Colonic mucosa (tissue), 4 donors: ENCODE measurements at regions of chr3 and their contacts with region 1.

Region 1: GRCh38 chr3:56702490-56703315 is 19.6 kb upstream of the TASOR start:
- DNase-seq: peak; percentile 61
- H3K4me3 ChIP-seq: no peak overlapping the region
- H3K27ac ChIP-seq: no peak overlapping the region
- H3K4me1 ChIP-seq: no peaks in the 10 kb centered on the region
- H3K27me3 ChIP-seq: no peaks in the 10 kb centered on the region
- CTCF ChIP-seq: peak; percentile 79

Region 2: DNA sequence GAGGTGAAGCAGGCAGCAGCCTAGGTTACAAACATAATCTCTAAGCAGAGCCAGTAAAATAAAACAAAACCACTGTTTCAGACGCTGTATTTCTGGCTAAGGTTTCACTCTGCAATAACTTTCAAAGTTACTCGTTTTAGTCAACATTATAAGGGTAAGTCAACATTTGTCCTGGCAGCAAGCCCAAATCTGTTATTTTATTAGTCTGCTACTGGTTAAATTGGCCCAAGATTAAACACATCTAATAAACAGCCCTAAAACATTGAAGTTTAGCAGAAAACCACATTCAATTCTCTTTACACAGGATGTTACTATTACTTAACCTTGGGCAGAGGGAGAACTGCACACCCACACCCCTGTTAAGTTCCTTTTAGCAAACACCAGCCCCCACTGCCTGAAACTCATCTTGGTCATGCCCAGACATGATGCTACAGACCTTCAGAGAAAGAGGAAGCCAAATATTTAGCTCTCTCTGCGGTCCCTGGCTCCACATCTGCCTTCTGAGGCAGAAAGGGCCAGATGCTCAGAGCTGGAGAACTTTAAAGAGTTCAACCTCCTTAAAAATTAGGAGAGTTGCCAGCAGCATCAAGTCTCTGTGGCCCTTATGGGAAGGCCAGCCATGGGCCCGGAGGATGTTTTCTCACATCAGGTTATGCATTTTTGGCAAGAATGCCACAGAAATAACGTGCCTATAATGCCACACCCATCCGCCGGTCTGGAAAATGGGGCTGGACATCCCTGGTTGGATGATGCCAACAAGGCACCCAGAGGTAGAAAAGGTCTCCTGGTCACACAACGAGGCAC is 81.1 kb after region 1 on chr3:
- intact Hi-C with region 1: no loop called
- DNase-seq: peak; percentile 76
- H3K4me3 ChIP-seq: no peak overlapping the region
- H3K27ac ChIP-seq: peak overlapping the region; percentile 49
- H3K4me1 ChIP-seq: peaks cover 28% of the 10 kb centered on the region
- H3K27me3 ChIP-seq: no peaks in the 10 kb centered on the region
- CTCF ChIP-seq: no peak

Region 3: DNA sequence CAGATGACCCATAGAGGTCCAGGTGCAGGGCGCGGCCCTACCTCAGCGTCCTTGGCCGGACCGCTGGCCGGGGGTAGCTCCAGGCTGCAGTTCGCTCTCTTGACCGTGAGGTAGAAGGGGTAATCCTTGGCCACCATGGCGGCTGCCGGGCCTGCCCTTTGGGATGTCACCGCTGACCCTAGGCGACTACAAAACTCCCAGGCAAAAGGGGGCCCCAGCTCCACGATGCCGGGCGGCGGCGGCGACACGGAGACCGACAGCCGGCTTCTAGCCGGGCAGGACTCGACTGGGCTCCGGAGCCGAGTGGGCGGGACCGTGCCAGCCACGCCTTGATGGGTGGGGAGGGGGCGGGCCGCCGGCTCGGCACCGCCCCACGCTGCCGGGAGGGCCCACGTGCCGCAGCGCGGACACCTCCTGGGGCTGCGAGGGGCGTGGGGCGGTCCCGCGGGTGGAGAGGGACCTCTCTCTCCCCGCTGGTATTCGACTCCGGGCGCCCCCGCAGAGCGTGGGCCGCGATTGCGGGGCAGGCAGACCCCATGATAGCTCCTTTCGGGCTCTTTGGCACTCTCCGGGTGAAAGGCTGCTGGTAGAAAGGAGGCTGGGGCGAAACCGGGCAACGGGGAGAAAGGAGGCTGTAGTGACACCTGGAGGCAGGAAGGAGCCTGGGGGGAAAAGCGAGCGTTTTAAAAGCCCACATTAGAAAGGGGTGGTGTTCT is 99.1 kb after region 1 on chr3 and contains the start of gene ARHGEF3:
- intact Hi-C with region 1: loop called (anchors 2 kb)
- DNase-seq: peak; percentile 88
- H3K4me3 ChIP-seq: peak within 1 kb of the TSS; percentile 85
- H3K27ac ChIP-seq: peak within 1 kb of the TSS; percentile 53
- H3K4me1 ChIP-seq: peaks cover 4% of the 10 kb centered on the region
- H3K27me3 ChIP-seq: no peaks in the 10 kb centered on the region
- CTCF ChIP-seq: peak; percentile 35
- total RNA-seq, gene ARHGEF3: 10.2 to 14.7 TPM

Region 4: DNA sequence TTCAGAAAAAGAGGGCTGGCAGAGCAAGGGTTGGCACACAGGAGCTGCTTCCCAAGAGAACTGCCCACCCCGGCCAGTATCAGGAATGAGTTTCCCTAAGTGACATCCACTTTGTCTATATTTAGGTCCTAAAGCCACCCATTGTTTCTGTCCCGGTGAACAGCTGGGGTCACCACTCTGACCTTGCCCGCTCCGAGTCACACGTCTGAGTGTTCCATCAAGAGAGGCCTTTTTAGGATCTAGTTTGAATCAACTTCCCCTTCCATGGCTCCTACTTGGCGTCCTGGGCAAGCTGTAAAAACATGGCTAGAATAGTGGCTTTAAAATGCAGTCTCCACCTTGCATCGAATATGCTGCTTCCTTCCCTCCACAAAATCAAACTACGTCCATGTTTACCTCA is 208.7 kb after region 1 on chr3:
- intact Hi-C with region 1: no loop called
- DNase-seq: no peak
- H3K4me3 ChIP-seq: no peak overlapping the region
- H3K27ac ChIP-seq: no peak overlapping the region
- H3K4me1 ChIP-seq: no peaks in the 10 kb centered on the region
- H3K27me3 ChIP-seq: no peaks in the 10 kb centered on the region
- CTCF ChIP-seq: no peak

Region 5: DNA sequence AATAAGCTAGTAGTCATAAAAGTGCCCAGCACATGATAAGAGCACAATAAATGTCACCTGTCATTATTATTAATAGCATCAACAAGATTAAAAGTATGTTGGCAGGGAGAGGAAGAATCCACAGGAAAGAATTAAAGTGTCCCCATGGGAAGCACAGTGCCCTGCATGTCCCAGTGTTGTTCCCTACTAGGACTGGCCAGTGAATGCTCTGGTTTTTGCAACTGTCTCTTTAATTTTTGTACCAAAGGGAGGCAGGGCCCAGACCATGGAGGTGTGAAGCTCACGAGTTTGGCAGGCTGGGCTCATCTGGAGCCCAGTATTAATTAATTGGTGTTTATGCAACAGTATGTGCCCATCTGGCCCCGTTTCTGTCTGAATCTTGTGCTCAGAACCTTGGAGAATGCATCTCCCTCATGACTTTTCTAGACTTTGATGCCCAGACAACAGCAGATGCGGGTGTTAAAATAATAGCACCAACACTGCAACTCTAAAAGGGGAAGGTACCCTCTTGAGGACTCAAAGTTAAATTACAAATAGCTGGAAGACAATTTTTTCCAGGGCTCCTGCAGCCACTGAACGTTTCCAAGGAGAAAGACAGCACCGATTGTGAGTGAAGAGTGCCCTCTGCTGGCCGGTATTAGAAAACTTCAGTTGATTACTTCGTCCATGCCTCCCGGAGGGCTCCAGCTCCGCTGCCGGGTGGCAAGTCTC is 285.9 kb after region 1 on chr3:
- intact Hi-C with region 1: loop called (anchors 2 kb)
- DNase-seq: peak; percentile 85
- H3K4me3 ChIP-seq: no peak overlapping the region
- H3K27ac ChIP-seq: no peak overlapping the region
- H3K4me1 ChIP-seq: peaks cover 5% of the 10 kb centered on the region
- H3K27me3 ChIP-seq: no peaks in the 10 kb centered on the region
- CTCF ChIP-seq: peak; percentile 66

Region 6: DNA sequence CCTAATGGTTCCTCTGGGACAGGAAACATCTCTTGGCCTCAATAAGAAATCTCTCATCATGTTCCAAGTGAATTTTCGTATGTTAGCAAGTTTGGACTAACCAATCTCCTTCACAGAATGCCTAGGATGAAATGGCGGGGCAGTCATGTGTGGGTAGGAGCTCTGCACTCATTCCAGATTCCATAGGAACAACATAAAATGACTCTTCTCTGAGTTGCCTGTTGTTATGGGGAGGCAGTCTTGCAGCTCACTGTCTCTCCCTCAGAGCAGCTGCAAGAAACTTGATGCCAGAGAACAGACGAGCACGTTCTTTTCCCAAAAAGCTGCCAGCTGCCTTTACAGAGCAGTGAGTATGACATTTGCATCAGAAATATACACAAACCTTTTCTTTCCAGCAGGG is 391.9 kb after region 1 on chr3:
- intact Hi-C with region 1: loop called (anchors 10 kb)
- DNase-seq: no peak
- H3K4me3 ChIP-seq: no peak overlapping the region
- H3K27ac ChIP-seq: no peak overlapping the region
- H3K4me1 ChIP-seq: no peaks in the 10 kb centered on the region
- H3K27me3 ChIP-seq: no peaks in the 10 kb centered on the region
- CTCF ChIP-seq: no peak